Heart left ventricle (tissue), 16 donors: ENCODE measurements at regions of chr7 and their contacts with region 1.

Region 1: GRCh38 chr7:116499168-116500077 is at the start of gene CAV2:
- DNase-seq: peak; percentile 86 to 88 (median 87)
- ATAC-seq: peak; percentile 79 to 93 (median 86)
- H3K4me3 ChIP-seq: peak within 1 kb of the TSS; percentile 75 to 95 (median 89)
- H3K27ac ChIP-seq: peak within 1 kb of the TSS; percentile 95 to 99 (median 98)
- H3K4me1 ChIP-seq: peaks cover 0 to 42% (median 24%) of the 10 kb centered on the region in 12 donors
- H3K27me3 ChIP-seq: peaks cover 0 to 17% (median 0%) of the 10 kb centered on the region in 9 donors
- CTCF ChIP-seq: no peak
- POLR2A ChIP-seq: peak in 1 of 2 donors; percentile 66
- total RNA-seq, gene CAV2: 189 to 345 (median 237) TPM

Region 2: DNA sequence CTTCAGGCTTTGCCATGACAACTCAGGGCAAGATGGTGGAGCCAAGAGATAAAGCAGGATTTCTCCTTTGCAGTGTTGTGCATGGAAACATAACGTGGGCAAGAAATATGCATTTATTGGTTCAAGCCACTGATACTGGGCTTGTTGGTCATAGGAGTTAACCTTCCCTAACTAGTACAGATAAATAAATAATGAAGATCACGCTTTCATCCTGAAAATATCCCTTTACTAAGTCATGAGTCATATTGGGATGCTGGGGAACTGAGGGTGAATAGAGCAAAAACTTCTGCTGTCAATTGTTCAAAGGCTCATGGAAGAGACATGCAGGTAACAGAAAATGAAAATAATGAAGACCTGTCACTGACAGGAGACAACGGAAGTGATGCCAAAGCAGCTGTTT is 233.5 kb before region 1 on chr7:
- intact Hi-C with region 1: loop called in 1 of 10 experiments (anchors 5 kb)
- DNase-seq: no peak
- ATAC-seq: no peak
- H3K4me3 ChIP-seq: no peak overlapping the region
- H3K27ac ChIP-seq: no peak overlapping the region
- H3K4me1 ChIP-seq: peaks cover 0 to 13% (median 3%) of the 10 kb centered on the region in 12 donors
- H3K27me3 ChIP-seq: no peaks in the 10 kb centered on the region
- CTCF ChIP-seq: no peak
- POLR2A ChIP-seq: no peak

Region 3: DNA sequence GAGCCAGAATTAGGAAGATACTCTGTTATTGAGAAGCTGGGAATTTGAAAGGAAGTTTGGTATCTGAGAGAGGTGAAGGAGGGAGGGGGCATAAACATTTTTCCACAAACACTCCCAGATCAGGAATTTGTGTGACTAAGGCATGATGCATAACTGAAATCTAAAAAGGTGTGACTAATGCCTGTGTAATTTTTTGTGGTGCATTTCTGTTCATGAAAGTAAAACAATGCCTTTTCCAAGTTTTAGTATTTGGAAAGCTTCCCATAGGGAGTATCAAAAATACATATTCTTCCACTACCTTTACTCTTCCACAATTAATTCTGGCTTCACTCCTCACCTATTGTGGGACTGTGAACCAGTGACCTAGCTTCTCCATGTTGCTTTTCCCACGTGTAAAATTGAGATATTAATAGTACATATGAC is 56.3 kb before region 1 on chr7:
- intact Hi-C with region 1: loop called in 8 of 10 experiments (anchors 5 to 10 kb)
- DNase-seq: no peak
- ATAC-seq: peak in 2 of 4 donors; percentile 27 to 40
- H3K4me3 ChIP-seq: no peak overlapping the region
- H3K27ac ChIP-seq: peak overlapping the region in 5 of 12 donors; percentile 3 to 81 (median 59)
- H3K4me1 ChIP-seq: peaks cover 3 to 63% (median 40%) of the 10 kb centered on the region in 12 donors
- H3K27me3 ChIP-seq: no peaks in the 10 kb centered on the region
- CTCF ChIP-seq: no peak
- POLR2A ChIP-seq: no peak

Region 4: DNA sequence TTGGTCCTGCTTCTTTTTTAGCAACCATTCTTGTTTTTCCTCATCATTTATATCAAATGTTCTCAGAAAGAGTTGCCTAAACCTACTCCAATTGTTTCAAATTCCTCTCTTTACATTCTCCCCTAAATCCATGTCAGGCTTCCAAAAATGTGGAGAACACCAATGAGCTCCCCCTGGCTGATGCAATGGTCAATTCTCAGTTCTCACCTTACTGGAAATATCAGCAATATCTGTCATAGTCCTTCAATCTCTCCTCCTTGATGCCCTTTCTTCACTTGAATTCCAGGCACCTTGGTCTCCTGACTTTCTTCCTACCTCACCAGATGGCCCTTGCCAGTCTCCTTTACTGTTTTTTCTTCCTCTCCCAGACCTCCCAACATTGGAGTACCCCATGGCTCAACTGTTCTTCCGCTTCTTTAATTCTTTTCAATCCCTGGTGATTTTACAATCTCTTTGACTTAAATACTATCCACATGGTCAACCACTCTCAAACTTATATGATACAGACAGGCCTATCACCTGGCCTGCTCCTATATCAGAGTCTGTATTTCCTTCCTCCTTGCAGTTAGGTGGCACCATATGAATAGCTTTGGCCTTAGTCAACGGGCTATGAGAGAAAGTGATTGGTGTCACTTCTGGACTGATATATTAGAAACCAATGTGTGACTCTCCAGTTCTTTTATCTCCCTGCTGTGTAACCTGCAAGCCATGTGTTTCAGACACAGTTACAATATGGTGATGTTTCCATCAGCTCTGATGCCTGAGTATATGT is 47.3 kb before region 1 on chr7:
- intact Hi-C with region 1: loop called in 5 of 10 experiments (anchors 5 to 10 kb)
- DNase-seq: no peak
- ATAC-seq: no peak
- H3K4me3 ChIP-seq: no peak overlapping the region
- H3K27ac ChIP-seq: peak overlapping the region in 1 of 12 donors; percentile 30
- H3K4me1 ChIP-seq: peaks cover 0 to 29% (median 11%) of the 10 kb centered on the region in 12 donors
- H3K27me3 ChIP-seq: no peaks in the 10 kb centered on the region
- CTCF ChIP-seq: peak in 4 of 12 donors; percentile 10 to 33 (median 14)
- POLR2A ChIP-seq: no peak

Region 5: DNA sequence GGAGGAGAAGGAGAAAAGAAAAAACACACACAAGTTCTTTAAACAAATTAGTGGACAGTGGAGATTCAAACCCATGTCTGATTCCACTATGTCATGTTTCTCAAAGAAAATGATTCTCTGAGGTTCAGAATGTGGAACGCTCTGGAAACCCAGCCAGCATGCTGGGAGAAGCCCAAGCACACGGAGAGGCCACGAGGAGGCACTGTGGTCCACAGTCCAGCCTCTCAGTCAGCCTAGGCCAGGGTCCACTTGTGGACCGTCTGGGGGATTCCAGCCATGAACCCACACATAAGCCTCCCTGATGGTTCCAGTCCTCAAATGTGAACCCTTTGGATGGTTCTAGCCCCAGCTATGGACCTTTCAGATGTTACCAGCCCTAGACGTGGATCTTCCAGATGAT is 98.9 kb after region 1 on chr7:
- intact Hi-C with region 1: no loop called
- DNase-seq: no peak
- ATAC-seq: peak in 2 of 4 donors; percentile 36 to 57
- H3K4me3 ChIP-seq: no peak overlapping the region
- H3K27ac ChIP-seq: no peak overlapping the region
- H3K4me1 ChIP-seq: no peaks in the 10 kb centered on the region
- H3K27me3 ChIP-seq: no peaks in the 10 kb centered on the region
- CTCF ChIP-seq: peak in 9 of 12 donors; percentile 6 to 45 (median 26)
- POLR2A ChIP-seq: no peak

Region 6: GRCh38 chr7:117127585-117128168 is 628.3 kb after region 1 on chr7:
- intact Hi-C with region 1: no loop called
- DNase-seq: peak in 4 of 5 donors; percentile 27 to 38 (median 30)
- ATAC-seq: peak; percentile 27 to 59 (median 50)
- H3K4me3 ChIP-seq: no peak overlapping the region
- H3K27ac ChIP-seq: no peak overlapping the region
- H3K4me1 ChIP-seq: peaks cover 0 to 40% (median 17%) of the 10 kb centered on the region in 12 donors
- H3K27me3 ChIP-seq: no peaks in the 10 kb centered on the region
- CTCF ChIP-seq: peak; percentile 62 to 83 (median 75)
- POLR2A ChIP-seq: no peak

Region 7: DNA sequence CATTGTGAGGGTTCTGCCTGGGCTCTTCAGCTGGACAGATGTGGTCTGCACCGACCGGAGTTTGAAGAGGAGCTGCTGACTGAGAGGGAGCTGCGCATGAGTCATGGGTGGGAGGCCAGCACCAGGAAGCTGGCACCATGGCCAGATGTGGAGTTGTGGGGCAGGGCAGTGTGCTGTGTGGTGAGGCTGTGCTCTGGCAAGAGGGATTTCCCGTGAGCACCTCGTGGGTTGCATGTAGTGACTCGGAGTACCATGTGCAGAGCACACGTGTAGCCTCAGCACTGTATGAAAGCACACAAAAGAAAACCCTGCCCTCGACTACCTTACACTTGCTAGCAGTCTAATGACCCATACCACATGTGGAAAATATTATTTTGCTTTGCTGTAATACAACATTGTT is 720.1 kb after region 1 on chr7:
- intact Hi-C with region 1: no loop called
- DNase-seq: no peak
- ATAC-seq: peak in 2 of 4 donors; percentile 18 to 45
- H3K4me3 ChIP-seq: no peak overlapping the region
- H3K27ac ChIP-seq: no peak overlapping the region
- H3K4me1 ChIP-seq: no peaks in the 10 kb centered on the region
- H3K27me3 ChIP-seq: no peaks in the 10 kb centered on the region
- CTCF ChIP-seq: no peak
- POLR2A ChIP-seq: no peak